HCT116 (cell line): ENCODE measurements at regions of chr9 and their contacts with region 1.

Region 1: DNA sequence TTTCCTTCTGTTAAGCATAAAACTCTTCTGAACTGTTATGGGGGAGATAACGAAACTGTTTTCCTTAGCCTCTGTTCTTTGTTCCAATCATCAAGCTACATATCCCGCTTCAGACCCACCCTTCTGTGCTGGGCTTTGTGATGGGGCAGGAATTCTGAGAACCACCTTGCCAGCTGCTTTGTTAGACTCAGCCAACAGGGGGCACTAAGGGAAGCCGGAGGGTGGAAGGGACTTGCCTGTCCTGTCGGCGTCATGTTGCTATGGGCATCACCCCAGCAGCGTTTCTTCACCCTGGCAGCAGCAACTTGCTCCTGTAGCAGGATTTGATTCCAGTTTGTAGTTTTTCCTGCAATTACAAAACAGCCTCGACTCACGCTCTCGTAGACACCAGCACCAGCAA is 169.1 kb downstream of the CAAP1 start:
- DNase-seq: peak; percentile 55
- ATAC-seq: peak; percentile 99
- H3K4me3 ChIP-seq: no peak overlapping the region
- H3K27ac ChIP-seq: no peak overlapping the region
- H3K4me1 ChIP-seq: no peaks in the 10 kb centered on the region
- H3K27me3 ChIP-seq: 0 out of 2 replicates have a peak, but pooled peaks cover 25% of the 10 kb centered on the region
- CTCF ChIP-seq: peak; percentile 34 to 89 (median 77); a peak in 5 of 6 replicates
- POLR2A ChIP-seq: no peak
- RAD21 ChIP-seq: peak; percentile 48

Region 2: DNA sequence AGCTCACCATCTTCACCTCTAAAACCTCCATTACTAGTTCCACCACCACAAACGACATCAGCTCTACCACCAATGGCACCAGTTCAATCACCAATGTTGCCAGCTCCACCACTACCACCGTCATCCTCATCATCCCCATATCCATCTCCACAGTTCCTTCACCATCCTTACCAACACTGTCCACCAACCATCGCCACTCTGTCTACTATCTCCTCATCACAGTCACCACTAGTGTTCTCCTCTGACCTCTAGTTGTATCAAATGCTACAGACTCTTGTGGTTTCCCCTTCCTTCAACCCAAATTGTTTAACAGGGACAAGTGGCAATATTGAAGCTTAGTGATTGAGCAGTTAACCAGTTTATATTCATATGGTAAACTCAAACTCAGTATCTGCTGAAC is 13.5 kb before region 1 on chr9:
- CTCF ChIA-PET with region 1: interaction called, 11 read pairs
- POLR2A ChIA-PET with region 1: no interaction called
- RAD21 ChIA-PET with region 1: no interaction called
- intact Hi-C with region 1: no loop called
- DNase-seq: no peak
- ATAC-seq: no peak
- H3K4me3 ChIP-seq: no peak overlapping the region
- H3K27ac ChIP-seq: no peak overlapping the region
- H3K4me1 ChIP-seq: no peaks in the 10 kb centered on the region
- H3K27me3 ChIP-seq: peaks cover 32% of the 10 kb centered on the region; the same call in 1 of the 2 replicates
- CTCF ChIP-seq: no peak
- POLR2A ChIP-seq: no peak
- RAD21 ChIP-seq: no peak

Region 3: GRCh38 chr9:26754509-26755164 is 31.2 kb after region 1 on chr9:
- CTCF ChIA-PET with region 1: no interaction called
- POLR2A ChIA-PET with region 1: no interaction called
- RAD21 ChIA-PET with region 1: no interaction called
- intact Hi-C with region 1: no loop called
- DNase-seq: no peak
- ATAC-seq: no peak
- H3K4me3 ChIP-seq: no peak overlapping the region
- H3K27ac ChIP-seq: no peak overlapping the region
- H3K4me1 ChIP-seq: no peaks in the 10 kb centered on the region
- H3K27me3 ChIP-seq: no peaks in the 10 kb centered on the region
- CTCF ChIP-seq: no peak
- POLR2A ChIP-seq: no peak
- RAD21 ChIP-seq: no peak

Region 4: DNA sequence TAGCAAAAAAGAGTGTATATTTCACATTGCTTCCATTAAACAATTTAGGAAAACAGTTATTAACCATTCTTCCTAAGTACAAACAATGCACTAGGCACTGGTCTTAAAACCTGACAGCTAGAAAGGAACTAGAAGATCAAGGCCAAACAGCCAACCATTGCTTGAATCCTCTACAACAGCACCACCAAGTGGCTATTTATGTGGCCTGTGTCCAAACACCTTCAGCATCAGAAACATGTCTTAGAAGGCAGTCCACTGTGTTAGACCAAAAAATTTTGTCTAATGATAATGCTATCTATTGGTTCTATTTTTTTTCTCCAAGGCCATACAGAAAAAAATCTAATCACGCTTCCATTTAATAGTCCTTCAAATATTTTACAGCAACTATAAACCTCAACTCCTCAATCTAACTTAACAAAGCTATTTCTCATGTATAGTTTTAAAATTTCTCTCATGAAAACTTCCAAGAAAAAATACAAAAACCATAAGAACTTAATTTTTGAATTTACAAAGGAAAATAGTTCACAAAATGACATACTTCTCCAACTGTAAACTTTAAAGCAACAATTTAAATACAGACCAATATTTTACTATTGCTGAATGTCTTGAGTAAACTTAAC is 133.0 kb after region 1 on chr9:
- CTCF ChIA-PET with region 1: interaction called, 13 read pairs
- POLR2A ChIA-PET with region 1: no interaction called
- RAD21 ChIA-PET with region 1: no interaction called
- intact Hi-C with region 1: loop called (anchors 1 kb)
- DNase-seq: peak; percentile 56
- ATAC-seq: peak; percentile 69
- H3K4me3 ChIP-seq: no peak overlapping the region
- H3K27ac ChIP-seq: no peak overlapping the region
- H3K4me1 ChIP-seq: no peaks in the 10 kb centered on the region
- H3K27me3 ChIP-seq: no peaks in the 10 kb centered on the region
- CTCF ChIP-seq: peak; percentile 44 to 80 (median 79); a peak in 5 of 6 replicates
- POLR2A ChIP-seq: no peak
- RAD21 ChIP-seq: peak; percentile 69

Region 5: DNA sequence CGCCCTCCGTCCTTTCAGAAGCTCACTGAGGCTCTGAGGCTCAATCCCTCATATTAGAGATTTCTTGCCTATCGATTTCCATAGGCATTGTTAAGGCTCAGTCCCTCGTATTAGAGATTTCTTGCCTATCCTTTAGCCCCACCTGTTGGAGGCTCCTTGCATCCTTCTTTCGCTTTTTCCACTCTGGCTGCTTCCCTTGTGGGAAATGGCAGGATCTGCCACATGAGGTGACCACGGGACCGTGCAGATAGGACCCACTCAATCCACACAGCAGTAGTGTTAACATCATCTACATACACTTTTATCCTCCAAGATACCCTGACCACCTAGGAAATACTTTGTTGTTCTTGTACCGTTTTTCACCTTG is 252.2 kb after region 1 on chr9:
- CTCF ChIA-PET with region 1: interaction called, 6 read pairs
- POLR2A ChIA-PET with region 1: no interaction called
- RAD21 ChIA-PET with region 1: no interaction called
- intact Hi-C with region 1: loop called (anchors 5 kb)
- DNase-seq: peak; percentile 48
- ATAC-seq: peak; percentile 90
- H3K4me3 ChIP-seq: no peak overlapping the region
- H3K27ac ChIP-seq: peak overlapping the region; percentile 21; the same call in 1 of the 2 replicates
- H3K4me1 ChIP-seq: peaks cover 13 to 14% of the 10 kb centered on the region in 2 experiments
- H3K27me3 ChIP-seq: no peaks in the 10 kb centered on the region
- CTCF ChIP-seq: peak; percentile 56 to 76 (median 68)
- POLR2A ChIP-seq: no peak
- RAD21 ChIP-seq: peak; percentile 81